PC-9 (cell line): ENCODE measurements at regions of chr17 and their contacts with region 1.

Region 1: DNA sequence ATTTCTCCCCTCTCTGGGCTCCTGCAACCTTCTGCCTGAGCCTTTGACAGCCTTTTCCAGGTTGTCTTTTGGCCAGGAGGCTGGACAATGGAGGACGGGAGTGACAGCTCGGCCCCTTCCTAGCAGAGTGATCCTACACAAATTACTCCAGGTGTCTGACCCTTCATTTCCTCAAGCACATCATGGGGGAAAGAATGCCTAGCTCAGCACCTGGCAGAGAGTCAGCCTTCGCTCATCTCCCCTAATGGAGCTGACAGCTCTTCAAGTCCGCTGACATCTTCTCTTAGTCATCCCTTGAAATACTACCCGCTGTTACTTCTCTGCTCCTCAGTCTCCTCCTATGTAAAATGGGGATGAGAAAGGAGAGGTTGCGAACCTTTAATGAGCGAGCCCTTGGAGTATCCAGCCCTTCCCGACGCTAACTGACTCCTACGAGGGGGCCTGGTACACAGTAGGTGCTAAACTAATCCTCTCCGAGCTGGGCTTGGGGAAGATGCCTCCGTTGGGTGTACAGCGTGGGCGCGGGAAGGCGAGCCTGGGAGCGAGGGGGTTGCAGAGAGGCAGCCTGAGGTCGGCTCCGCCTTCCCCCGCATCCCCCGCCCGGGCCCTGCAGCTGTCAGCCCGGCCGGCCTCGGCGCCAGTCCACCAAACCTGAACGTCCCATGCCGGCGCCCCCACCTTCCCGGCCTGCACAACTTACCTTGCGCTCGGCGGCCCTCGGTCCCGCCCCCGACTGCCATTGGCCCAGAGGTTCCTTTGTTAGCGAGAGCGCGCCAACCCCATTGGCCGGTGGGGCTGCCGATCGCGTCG is 481 bp upstream of the MPRIP start:
- DNase-seq: peak; percentile 93 to 99
- H3K4me3 ChIP-seq: peak overlapping the region; percentile 60; the same call in 1 of the 2 replicates
- H3K27ac ChIP-seq: peak overlapping the region; percentile 36
- H3K4me1 ChIP-seq: peaks cover 59% of the 10 kb centered on the region
- H3K27me3 ChIP-seq: no peaks in the 10 kb centered on the region
- CTCF ChIP-seq: no peak

Region 2: GRCh38 chr17:16639438-16639837 is 402.3 kb before region 1 on chr17:
- CTCF ChIA-PET with region 1: no interaction called
- POLR2A ChIA-PET with region 1: no interaction called
- intact Hi-C with region 1: no loop called
- DNase-seq: no peak
- H3K4me3 ChIP-seq: no peak overlapping the region
- H3K27ac ChIP-seq: no peak overlapping the region
- H3K4me1 ChIP-seq: no peaks in the 10 kb centered on the region
- H3K27me3 ChIP-seq: no peaks in the 10 kb centered on the region
- CTCF ChIP-seq: no peak

Region 3: GRCh38 chr17:17028059-17028877 is 13.5 kb before region 1 on chr17:
- CTCF ChIA-PET with region 1: interaction called, 8 read pairs
- POLR2A ChIA-PET with region 1: interaction called, 7 read pairs
- intact Hi-C with region 1: loop called (anchors 1 kb)
- DNase-seq: peak; percentile 99 to 100
- H3K4me3 ChIP-seq: peak overlapping the region; percentile 5; the same call in 1 of the 2 replicates
- H3K27ac ChIP-seq: peak overlapping the region; percentile 88
- H3K4me1 ChIP-seq: peaks cover 68% of the 10 kb centered on the region
- H3K27me3 ChIP-seq: no peaks in the 10 kb centered on the region
- CTCF ChIP-seq: no peak; the same call in 1 of the 2 replicates

Region 4: DNA sequence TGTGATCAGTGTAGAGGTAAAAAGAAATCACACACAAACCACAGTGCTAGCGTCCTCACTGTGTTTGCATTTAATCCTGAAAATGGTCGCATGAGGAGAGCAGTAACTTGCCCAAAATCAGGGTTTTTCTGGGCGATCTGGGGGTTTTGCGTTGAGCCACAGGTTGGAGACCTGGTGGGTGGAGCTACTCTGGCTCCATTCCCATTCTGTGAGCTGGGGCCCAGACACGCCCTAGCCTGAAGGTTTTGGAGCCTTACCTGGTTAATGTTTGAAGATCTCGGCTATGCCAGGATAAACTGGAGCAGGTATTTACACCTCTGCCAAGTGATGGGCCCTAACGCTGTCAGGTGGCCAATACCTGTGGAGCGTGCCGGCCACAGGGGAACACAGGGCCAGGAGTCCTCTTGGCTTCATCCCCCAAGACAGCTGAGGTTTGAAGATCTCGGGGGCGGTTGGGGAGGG is 48.9 kb after region 1 on chr17:
- CTCF ChIA-PET with region 1: no interaction called
- POLR2A ChIA-PET with region 1: no interaction called
- intact Hi-C with region 1: loop called (anchors 1 kb)
- DNase-seq: peak in 1 of 2 experiments; percentile 67
- H3K4me3 ChIP-seq: no peak overlapping the region
- H3K27ac ChIP-seq: 0 out of 2 replicates have a peak overlapping the region, but pooled peaks have one; percentile 2
- H3K4me1 ChIP-seq: peaks cover 13% of the 10 kb centered on the region
- H3K27me3 ChIP-seq: no peaks in the 10 kb centered on the region
- CTCF ChIP-seq: no peak

Region 5: DNA sequence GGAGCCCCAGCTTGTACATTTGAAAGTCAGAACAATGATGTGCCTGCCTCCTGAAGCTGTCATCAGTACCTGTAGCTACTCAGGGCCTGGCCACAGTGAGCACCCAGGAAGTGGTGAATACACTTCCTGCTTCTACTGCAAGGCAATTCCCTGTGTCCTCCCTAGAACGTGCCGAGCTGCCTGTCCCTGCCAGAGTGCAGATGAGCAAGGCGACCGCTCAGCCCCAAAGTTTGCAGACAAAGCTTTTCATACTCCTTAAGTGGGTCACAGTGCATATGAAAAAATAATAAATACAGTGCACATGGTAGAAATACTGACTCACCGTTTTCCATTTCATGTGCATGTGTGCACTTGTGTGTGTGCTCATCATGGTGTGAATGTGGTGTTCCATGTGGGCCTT is 77.8 kb after region 1 on chr17:
- CTCF ChIA-PET with region 1: no interaction called
- POLR2A ChIA-PET with region 1: interaction called, 11 read pairs
- intact Hi-C with region 1: no loop called
- DNase-seq: no peak
- H3K4me3 ChIP-seq: no peak overlapping the region
- H3K27ac ChIP-seq: peak overlapping the region; percentile 20; the same call in 1 of the 2 replicates
- H3K4me1 ChIP-seq: peaks cover 9% of the 10 kb centered on the region; the same call in 1 of the 2 replicates
- H3K27me3 ChIP-seq: no peaks in the 10 kb centered on the region
- CTCF ChIP-seq: no peak